GM12878 (cell line): ENCODE measurements at regions of chr2 and their contacts with region 1.

Region 1: GRCh38 chr2:142937347-142937746 is 59.9 kb downstream of the KYNU start:
- DNase-seq: no peak
- ATAC-seq: peak; percentile 22; the same call in 2 of the 3 replicates
- H3K4me3 ChIP-seq: no peak overlapping the region
- H3K27ac ChIP-seq: no peak overlapping the region
- H3K4me1 ChIP-seq: no peaks in the 10 kb centered on the region
- H3K27me3 ChIP-seq: no peaks in the 10 kb centered on the region
- CTCF ChIP-seq: no peak
- EP300 ChIP-seq: no peak
- POLR2A ChIP-seq: no peak
- RAD21 ChIP-seq: no peak

Region 2: DNA sequence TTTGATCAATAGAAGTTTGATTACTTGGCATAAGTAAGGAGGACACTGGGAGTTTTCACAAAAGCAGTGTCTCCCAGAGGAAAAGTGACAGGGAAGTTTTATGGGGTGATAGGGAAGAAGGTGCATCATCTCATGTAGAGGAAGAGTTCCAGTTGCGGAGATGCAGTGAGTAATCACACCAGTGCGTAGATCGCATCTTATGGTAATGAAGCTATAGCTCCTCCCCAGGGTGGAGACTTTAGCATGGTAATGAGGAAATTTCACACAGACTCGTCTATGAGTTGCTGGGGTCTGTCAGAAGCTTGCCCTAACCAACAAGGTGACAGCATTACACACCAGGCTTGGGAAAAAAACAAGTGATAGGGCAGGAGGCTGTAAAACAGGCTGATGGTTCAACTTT is 10.9 kb before region 1 on chr2:
- CTCF ChIA-PET with region 1: interaction called, 5 read pairs
- POLR2A ChIA-PET with region 1: no interaction called
- RAD21 ChIA-PET with region 1: interaction called, 3 read pairs
- SMC1A ChIA-PET with region 1: interaction called, 10 read pairs
- in situ Hi-C with region 1: no loop called
- intact Hi-C with region 1: no loop called
- DNase-seq: no peak
- ATAC-seq: no peak
- H3K4me3 ChIP-seq: no peak overlapping the region
- H3K27ac ChIP-seq: no peak overlapping the region
- H3K4me1 ChIP-seq: no peaks in the 10 kb centered on the region
- H3K27me3 ChIP-seq: no peaks in the 10 kb centered on the region
- CTCF ChIP-seq: no peak
- EP300 ChIP-seq: no peak
- POLR2A ChIP-seq: no peak
- RAD21 ChIP-seq: no peak

Region 3: GRCh38 chr2:142951190-142952007 is 14.1 kb after region 1 on chr2:
- CTCF ChIA-PET with region 1: interaction called, 15 read pairs
- POLR2A ChIA-PET with region 1: no interaction called
- RAD21 ChIA-PET with region 1: no interaction called
- SMC1A ChIA-PET with region 1: interaction called, 15 read pairs
- in situ Hi-C with region 1: no loop called
- intact Hi-C with region 1: no loop called
- DNase-seq: no peak
- ATAC-seq: no peak
- H3K4me3 ChIP-seq: no peak overlapping the region
- H3K27ac ChIP-seq: no peak overlapping the region
- H3K4me1 ChIP-seq: no peaks in the 10 kb centered on the region
- H3K27me3 ChIP-seq: no peaks in the 10 kb centered on the region
- CTCF ChIP-seq: no peak
- EP300 ChIP-seq: no peak
- POLR2A ChIP-seq: no peak
- RAD21 ChIP-seq: no peak

Region 4: GRCh38 chr2:142974288-142975024 is 37.1 kb after region 1 on chr2:
- CTCF ChIA-PET with region 1: interaction called, 5 read pairs
- POLR2A ChIA-PET with region 1: no interaction called
- RAD21 ChIA-PET with region 1: interaction called, 9 read pairs
- SMC1A ChIA-PET with region 1: interaction called, 11 read pairs
- in situ Hi-C with region 1: no loop called
- intact Hi-C with region 1: no loop called
- DNase-seq: no peak
- ATAC-seq: peak; percentile 61
- H3K4me3 ChIP-seq: no peak overlapping the region
- H3K27ac ChIP-seq: no peak overlapping the region
- H3K4me1 ChIP-seq: peaks cover 9% of the 10 kb centered on the region
- H3K27me3 ChIP-seq: no peaks in the 10 kb centered on the region
- CTCF ChIP-seq: no peak
- EP300 ChIP-seq: no peak
- POLR2A ChIP-seq: no peak
- RAD21 ChIP-seq: no peak